AG04449 (cell line): ENCODE measurements at regions of chr1 and their contacts with region 1.

Region 1: DNA sequence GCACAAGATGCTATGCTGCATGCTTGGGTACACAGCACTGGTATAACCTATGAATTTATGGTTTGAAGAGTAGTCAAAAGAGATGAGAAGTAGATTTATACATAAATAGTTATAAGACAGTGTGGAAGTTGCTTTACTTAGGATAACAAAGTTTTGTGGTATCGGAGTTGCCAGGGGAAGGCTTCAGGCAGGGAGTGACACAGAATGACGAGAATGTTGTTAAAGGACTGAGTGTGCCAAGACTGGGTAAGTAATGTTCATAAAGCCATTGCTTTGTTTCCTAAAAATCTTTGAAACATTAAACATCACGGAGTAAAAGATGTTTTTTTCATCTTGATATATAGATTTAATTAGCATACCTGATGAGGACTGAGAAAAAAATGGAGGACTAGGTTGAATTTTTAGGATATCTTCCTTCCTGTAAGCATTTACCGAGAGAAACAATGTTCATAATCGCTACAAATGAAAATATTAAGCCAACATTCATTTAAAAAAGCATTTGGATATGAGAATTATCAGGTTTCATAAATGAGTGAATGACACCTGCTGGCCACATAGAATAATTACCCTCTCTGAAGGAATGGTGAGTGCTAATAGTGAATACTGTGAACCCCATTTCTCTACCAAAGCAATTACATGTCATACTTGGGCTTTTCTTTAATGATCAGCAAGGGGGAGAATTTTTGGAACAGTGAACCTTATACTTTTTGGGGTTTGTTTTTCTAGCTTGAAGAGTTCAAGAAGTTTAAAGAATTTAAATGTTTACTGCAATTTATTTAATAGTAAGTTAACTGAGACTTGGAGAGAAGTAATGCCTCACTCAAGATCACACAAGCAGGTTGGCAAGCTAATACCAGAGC is 28.4 kb downstream of the EXTL2 start:
- DNase-seq: no peak
- H3K4me3 ChIP-seq: no peak overlapping the region
- CTCF ChIP-seq: peak; percentile 42

Region 2: DNA sequence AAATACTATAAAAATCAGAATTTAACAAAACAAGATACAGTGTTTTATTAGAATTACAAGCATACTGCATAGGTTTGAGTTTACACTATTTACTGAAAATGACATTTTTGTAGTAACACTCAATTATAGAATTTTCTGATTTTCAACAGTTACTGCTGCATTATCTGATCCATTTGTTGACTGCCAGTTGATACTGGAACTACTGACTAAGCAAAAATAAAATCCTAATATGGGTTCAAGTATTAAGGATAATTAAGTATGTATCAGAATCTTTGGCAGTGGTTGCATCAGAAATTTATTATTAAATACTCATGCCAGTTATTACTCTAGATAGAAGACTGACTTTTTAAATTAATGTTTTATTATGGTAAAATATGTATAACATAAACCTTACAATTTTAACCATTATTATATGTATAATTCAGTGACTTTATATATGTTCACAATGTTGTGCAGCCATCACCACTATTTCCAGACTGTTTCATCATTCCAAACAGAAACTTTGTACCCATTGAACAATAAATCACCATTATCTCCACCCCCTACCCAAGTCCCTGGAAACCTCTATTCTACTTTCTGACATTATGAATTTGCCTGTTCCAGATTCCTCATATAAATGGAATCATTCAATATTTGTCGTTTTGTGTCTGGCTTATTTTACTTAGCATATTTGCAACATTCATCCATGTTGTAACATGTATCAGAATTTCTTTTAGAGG is 386.5 kb before region 1 on chr1:
- CTCF ChIA-PET with region 1: interaction called, 27 read pairs
- POLR2A ChIA-PET with region 1: no interaction called
- DNase-seq: no peak
- H3K4me3 ChIP-seq: no peak overlapping the region
- CTCF ChIP-seq: no peak

Region 3: GRCh38 chr1:100532645-100533044 is 333.6 kb before region 1 on chr1:
- CTCF ChIA-PET with region 1: interaction called, 12 read pairs
- POLR2A ChIA-PET with region 1: no interaction called
- DNase-seq: no peak
- H3K4me3 ChIP-seq: no peak overlapping the region
- CTCF ChIP-seq: no peak

Region 4: GRCh38 chr1:100606438-100606837 is 259.8 kb before region 1 on chr1:
- CTCF ChIA-PET with region 1: interaction called, 63 read pairs
- POLR2A ChIA-PET with region 1: no interaction called
- DNase-seq: no peak
- H3K4me3 ChIP-seq: no peak overlapping the region
- CTCF ChIP-seq: peak; percentile 75

Region 5: GRCh38 chr1:100622037-100622436 is 244.2 kb before region 1 on chr1:
- CTCF ChIA-PET with region 1: interaction called, 14 read pairs
- POLR2A ChIA-PET with region 1: interaction called, 4 read pairs
- DNase-seq: peak; percentile 99
- H3K4me3 ChIP-seq: no peak overlapping the region
- CTCF ChIP-seq: no peak

Region 6: GRCh38 chr1:100775483-100775882 is 90.8 kb before region 1 on chr1:
- CTCF ChIA-PET with region 1: no interaction called
- POLR2A ChIA-PET with region 1: no interaction called
- DNase-seq: no peak
- H3K4me3 ChIP-seq: no peak overlapping the region
- CTCF ChIP-seq: no peak

Region 7: DNA sequence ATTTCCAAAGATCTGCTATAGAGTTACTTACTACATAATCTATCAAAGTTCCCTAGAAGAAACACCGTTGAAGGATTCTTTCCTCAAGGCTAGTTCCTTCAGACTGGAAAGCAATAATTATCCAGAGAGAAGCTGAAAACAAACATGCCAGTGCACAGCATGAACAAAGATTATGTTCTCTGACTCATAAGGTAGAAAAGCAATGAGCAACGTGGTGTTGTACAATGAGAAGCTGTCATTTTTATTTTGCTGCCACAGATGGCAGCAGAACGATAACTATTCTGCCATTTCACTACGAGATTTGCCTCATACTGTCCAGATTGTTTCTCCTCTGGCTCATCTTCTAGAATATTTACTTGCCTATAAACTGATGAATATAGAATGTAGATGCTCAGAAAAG is 17.7 kb after region 1 on chr1:
- CTCF ChIA-PET with region 1: interaction called, 48 read pairs
- POLR2A ChIA-PET with region 1: no interaction called
- DNase-seq: peak; percentile 26
- H3K4me3 ChIP-seq: no peak overlapping the region
- CTCF ChIP-seq: peak; percentile 12